ENCODE measurements at regions of chr3 and their contacts with region 1.

Region 1: DNA sequence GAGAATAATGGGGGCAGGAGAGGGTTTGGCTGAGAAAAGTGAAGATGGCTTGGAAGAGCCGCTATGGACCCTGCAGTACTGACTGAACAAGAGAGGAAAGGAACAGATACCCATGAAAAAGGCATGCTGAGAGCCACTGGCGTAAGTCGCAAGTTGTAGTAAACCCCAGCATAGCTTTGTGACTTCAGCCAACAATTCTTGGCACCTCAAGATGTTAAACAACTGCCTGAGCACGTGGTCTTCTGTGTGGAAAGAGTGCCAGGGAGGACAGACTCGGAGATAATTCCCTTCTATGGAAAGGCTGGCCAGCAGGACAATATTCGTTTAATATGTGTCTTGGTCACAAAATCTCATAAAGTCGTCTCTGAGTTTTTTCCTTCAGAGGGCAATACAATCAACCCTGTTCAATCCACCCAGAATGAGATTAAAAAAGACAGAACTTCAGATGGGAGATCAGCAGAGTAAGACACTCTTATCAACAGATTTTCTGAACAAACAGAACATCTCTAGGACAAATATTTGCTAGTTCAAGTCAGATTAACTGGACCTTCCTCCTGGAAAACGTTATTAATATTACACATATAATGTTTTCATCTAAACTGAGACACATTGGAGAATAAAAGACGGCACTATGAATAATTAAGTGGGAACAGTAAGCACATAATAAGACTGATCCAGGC is 49.2 kb downstream of the NEK10 start:
- DNase-seq: peak in 1 of 2 donors; percentile 28
- ATAC-seq: peak in 7 of 8 donors; percentile 71 to 87 (median 76)
- H3K4me3 ChIP-seq: no peak overlapping the region
- H3K27ac ChIP-seq: peak overlapping the region in 5 of 10 donors; percentile 7 to 59 (median 24)
- H3K4me1 ChIP-seq: peaks cover 0 to 16% (median 0%) of the 10 kb centered on the region in 9 donors
- H3K27me3 ChIP-seq: no peaks in the 10 kb centered on the region
- CTCF ChIP-seq: no peak

Region 2: GRCh38 chr3:27467545-27467944 is 147.6 kb after region 1 on chr3:
- intact Hi-C with region 1: loop called in 3 of 10 experiments (anchors 5 to 10 kb)
- DNase-seq: no peak
- ATAC-seq: peak in 6 of 8 donors; percentile 38 to 78 (median 66)
- H3K4me3 ChIP-seq: no peak overlapping the region
- H3K27ac ChIP-seq: peak overlapping the region in 1 of 10 donors; percentile 3
- H3K4me1 ChIP-seq: peaks cover 0 to 15% (median 3%) of the 10 kb centered on the region in 9 donors
- H3K27me3 ChIP-seq: no peaks in the 10 kb centered on the region
- CTCF ChIP-seq: peak in 8 of 9 donors; percentile 21 to 67 (median 55)

Region 3: GRCh38 chr3:27681245-27681748 is 361.3 kb after region 1 on chr3:
- intact Hi-C with region 1: loop called in 2 of 10 experiments (anchors 5 to 10 kb)
- DNase-seq: peak in 1 of 2 donors; percentile 38
- ATAC-seq: peak in 7 of 8 donors; percentile 20 to 67 (median 51)
- H3K4me3 ChIP-seq: peak overlapping the region in 2 of 10 donors; percentile 19 to 26
- H3K27ac ChIP-seq: peak overlapping the region in 2 of 10 donors; percentile 48 to 51
- H3K4me1 ChIP-seq: peaks cover 0 to 13% (median 5%) of the 10 kb centered on the region in 9 donors
- H3K27me3 ChIP-seq: no peaks in the 10 kb centered on the region
- CTCF ChIP-seq: peak; percentile 31 to 71 (median 65)